B cell (primary cell): ENCODE measurements at regions of chr2 and their contacts with region 1.

Region 1: GRCh38 chr2:30421604-30422443 is 25.2 kb upstream of the LCLAT1 start:
- DNase-seq: peak; percentile 19
- ATAC-seq: peak; percentile 59
- H3K4me3 ChIP-seq: peak overlapping the region in 1 of 5 experiments; percentile 41
- H3K4me3 Mint-ChIP-seq: peak overlapping the region; percentile 64
- H3K27ac ChIP-seq: peak overlapping the region; percentile 64 to 81
- H3K27ac Mint-ChIP-seq: peak overlapping the region; percentile 82
- H3K4me1 ChIP-seq: peaks cover 28 to 32% of the 10 kb centered on the region in 2 donors
- H3K4me1 Mint-ChIP-seq: peaks cover 31% of the 10 kb centered on the region
- H3K27me3 ChIP-seq: no peaks in the 10 kb centered on the region
- H3K27me3 Mint-ChIP-seq: no peaks in the 10 kb centered on the region
- CTCF ChIP-seq: no peak

Region 2: DNA sequence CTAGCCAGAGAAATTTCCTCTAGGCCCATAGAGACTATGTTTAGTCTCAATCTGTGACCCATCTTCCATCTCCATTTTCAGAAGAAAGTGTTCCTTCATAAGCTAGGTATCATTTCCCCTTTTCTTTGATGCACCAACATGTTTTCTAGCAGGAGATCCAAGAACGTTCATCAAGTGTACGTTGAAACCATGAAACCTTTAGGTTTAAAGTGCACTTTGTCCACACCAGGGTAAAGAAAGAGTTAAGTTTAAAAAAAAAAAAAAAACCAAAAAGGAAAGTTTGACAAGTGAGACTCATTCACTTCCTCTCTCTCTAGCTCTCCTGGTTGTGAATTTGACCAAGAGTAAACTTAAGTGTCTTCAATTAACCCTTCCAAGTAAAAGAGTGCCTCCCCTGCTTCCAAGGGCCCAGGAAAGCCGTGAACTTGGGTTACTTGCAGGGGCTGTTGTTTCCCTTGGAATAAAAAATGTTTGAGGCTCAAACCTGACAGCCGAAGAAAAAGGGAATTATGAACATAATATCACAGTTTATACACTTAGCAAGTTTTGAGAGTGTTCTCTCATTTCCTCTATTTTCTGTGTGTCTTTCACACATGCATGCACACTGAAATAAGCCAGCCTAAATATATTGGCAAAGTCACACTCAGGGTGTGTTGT is 133.8 kb before region 1 on chr2:
- CTCF ChIA-PET with region 1: interaction called, 3 read pairs
- POLR2A ChIA-PET with region 1: interaction called, 4 read pairs
- intact Hi-C with region 1: loop called (anchors 5 kb)
- DNase-seq: peak; percentile 77
- ATAC-seq: peak; percentile 85
- H3K4me3 ChIP-seq: peak overlapping the region; percentile 19 to 69 (median 34)
- H3K4me3 Mint-ChIP-seq: peak overlapping the region; percentile 58
- H3K27ac ChIP-seq: peak overlapping the region; percentile 81 to 86
- H3K27ac Mint-ChIP-seq: peak overlapping the region; percentile 84
- H3K4me1 ChIP-seq: peaks cover 83 to 91% of the 10 kb centered on the region in 2 donors
- H3K4me1 Mint-ChIP-seq: peaks cover 82% of the 10 kb centered on the region
- H3K27me3 ChIP-seq: no peaks in the 10 kb centered on the region
- H3K27me3 Mint-ChIP-seq: no peaks in the 10 kb centered on the region
- CTCF ChIP-seq: no peak

Region 3: DNA sequence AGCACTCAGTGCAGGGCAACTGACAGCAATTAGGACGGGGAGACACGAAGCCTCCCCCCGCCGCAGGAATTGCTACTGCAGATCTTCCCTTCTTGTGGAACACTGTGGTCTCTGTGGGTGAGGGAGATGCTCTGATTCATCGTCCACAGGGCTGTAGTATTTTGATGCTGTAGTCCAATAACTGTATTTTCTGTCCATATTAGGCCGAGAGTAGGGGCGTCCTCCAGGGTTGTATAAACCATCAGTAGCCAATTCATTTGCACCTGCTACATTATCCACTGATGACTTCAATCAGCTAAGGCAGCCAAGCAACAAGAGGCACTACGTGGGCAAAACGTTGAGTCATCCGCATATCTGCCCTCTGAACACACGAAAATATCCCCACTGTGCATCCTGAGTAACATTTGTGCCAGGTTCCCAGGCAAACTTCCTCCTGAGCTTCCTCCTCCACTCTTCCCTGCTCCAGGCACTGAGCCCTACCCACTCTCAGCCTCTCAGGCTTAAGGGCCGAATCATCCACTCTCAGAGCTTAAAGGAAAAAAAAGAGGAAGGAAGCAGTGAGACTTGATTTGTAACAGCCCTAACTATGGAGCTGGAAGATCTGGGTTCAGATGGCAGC is 128.4 kb before region 1 on chr2:
- CTCF ChIA-PET with region 1: interaction called, 3 read pairs
- POLR2A ChIA-PET with region 1: interaction called, 10 read pairs
- intact Hi-C with region 1: loop called (anchors 5 kb)
- DNase-seq: peak; percentile 56
- ATAC-seq: peak; percentile 74
- H3K4me3 ChIP-seq: no peak overlapping the region
- H3K4me3 Mint-ChIP-seq: peak overlapping the region; percentile 73
- H3K27ac ChIP-seq: peak overlapping the region; percentile 25 to 50
- H3K27ac Mint-ChIP-seq: peak overlapping the region; percentile 94
- H3K4me1 ChIP-seq: peaks cover 66 to 70% of the 10 kb centered on the region in 2 donors
- H3K4me1 Mint-ChIP-seq: peaks cover 79% of the 10 kb centered on the region
- H3K27me3 ChIP-seq: no peaks in the 10 kb centered on the region
- H3K27me3 Mint-ChIP-seq: no peaks in the 10 kb centered on the region
- CTCF ChIP-seq: no peak

Region 4: GRCh38 chr2:30385327-30385726 is 36.5 kb before region 1 on chr2:
- CTCF ChIA-PET with region 1: no interaction called
- POLR2A ChIA-PET with region 1: no interaction called
- intact Hi-C with region 1: loop called (anchors 5 kb)
- DNase-seq: no peak
- ATAC-seq: no peak
- H3K4me3 ChIP-seq: no peak overlapping the region
- H3K4me3 Mint-ChIP-seq: no peak overlapping the region
- H3K27ac ChIP-seq: no peak overlapping the region
- H3K27ac Mint-ChIP-seq: no peak overlapping the region
- H3K4me1 ChIP-seq: peaks cover 9 to 12% of the 10 kb centered on the region in 2 donors
- H3K4me1 Mint-ChIP-seq: peaks cover 13% of the 10 kb centered on the region
- H3K27me3 ChIP-seq: no peaks in the 10 kb centered on the region
- H3K27me3 Mint-ChIP-seq: peaks cover 22% of the 10 kb centered on the region
- CTCF ChIP-seq: no peak

Region 5: DNA sequence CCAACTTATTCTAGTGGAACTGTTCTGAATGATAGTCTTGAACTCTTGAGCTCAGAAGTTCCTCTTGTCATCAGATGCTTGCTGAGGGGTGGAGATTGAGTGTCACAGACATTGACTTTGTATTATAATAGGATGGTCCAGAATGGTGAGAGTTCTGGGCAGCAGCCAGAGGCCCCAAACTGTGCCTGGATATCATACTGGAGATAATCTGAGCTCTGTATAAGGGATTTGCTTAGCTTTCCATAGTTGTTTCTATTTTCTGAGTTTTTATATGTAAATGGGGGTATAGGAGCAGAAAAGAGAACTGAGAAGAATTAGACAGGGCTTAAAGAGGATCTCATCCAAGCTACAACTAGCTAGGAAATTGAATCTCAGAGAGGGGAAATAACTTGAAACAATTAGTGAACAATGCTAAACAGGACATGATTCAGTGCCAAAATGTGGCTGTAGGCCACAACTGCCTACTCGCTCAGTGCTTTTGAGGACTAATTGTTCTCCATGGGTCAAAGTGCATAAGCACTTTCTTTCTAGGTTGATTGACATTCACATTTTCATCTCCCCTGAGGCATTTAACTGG is 15.1 kb after region 1 on chr2:
- CTCF ChIA-PET with region 1: interaction called, 7 read pairs
- POLR2A ChIA-PET with region 1: interaction called, 11 read pairs
- intact Hi-C with region 1: loop called (anchors 2 kb)
- DNase-seq: peak; percentile 68
- ATAC-seq: peak; percentile 83
- H3K4me3 ChIP-seq: no peak overlapping the region
- H3K4me3 Mint-ChIP-seq: peak overlapping the region; percentile 66
- H3K27ac ChIP-seq: peak overlapping the region; percentile 70 to 78
- H3K27ac Mint-ChIP-seq: peak overlapping the region; percentile 90
- H3K4me1 ChIP-seq: peaks cover 28 to 39% of the 10 kb centered on the region in 2 donors
- H3K4me1 Mint-ChIP-seq: peaks cover 32% of the 10 kb centered on the region
- H3K27me3 ChIP-seq: no peaks in the 10 kb centered on the region
- H3K27me3 Mint-ChIP-seq: no peaks in the 10 kb centered on the region
- CTCF ChIP-seq: no peak